ENCODE measurements at regions of chr15 and their contacts with region 1.

Region 1: DNA sequence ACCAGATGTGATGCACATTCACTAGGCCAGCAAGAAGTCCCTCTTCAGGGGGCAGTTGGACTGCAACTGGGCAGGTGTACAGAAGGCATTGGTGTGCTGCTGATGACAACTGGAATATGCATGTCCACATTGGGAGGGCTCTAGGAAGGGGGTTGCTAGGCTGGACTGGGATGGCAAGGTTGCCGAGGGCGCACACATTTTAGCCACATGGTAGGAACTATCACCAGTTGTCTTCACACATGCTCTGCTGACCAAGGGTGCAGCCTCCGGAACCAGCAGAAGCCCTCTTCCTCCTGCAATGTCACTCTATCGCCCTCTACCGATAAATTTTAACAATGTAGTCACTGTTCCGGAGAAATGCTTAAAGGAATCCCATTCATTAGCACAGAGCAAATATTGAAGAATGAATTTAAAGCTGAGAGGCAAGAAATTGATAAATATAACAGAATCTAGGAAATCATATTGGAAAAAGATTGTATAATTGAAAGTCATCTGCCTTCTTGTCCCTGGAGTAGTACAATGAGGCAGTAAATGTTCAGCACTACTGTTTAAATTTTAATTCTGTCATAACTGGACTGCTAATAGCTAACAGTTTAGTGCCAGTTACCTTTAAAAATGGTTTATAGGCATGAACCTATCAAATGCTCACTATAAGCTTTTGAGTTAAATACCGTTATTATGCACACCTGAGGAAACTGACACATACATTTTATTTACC is 22.6 kb upstream of the LYSMD4 start:
- DNase-seq: peak; percentile 37
- H3K4me3 Mint-ChIP-seq: no peak overlapping the region
- H3K27ac Mint-ChIP-seq: no peak overlapping the region
- H3K4me1 Mint-ChIP-seq: no peaks in the 10 kb centered on the region
- H3K27me3 Mint-ChIP-seq: peaks cover 3% of the 10 kb centered on the region

Region 2: DNA sequence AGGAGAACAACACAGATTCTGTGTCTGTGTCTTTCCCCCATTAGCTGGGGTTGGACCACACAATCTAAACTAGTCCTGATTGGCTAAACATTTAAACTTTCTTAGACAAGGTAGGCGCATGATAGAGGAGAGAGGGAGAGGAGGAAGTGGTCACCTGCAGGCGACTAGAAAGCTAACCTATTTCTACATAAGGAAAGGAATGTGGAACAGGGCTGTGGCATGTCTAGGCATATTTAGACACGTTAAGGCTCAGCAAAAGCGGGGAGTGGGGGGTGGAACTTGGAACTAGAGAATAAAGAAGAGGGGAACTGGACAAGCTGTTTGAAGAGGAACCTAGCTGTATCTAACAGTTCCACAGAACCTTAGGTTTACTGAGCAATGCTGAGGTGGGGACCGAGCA is 491.7 kb before region 1 on chr15:
- CTCF ChIA-PET with region 1: interaction called, 84 read pairs
- POLR2A ChIA-PET with region 1: no interaction called
- DNase-seq: no peak
- H3K4me3 Mint-ChIP-seq: no peak overlapping the region
- H3K27ac Mint-ChIP-seq: no peak overlapping the region
- H3K4me1 Mint-ChIP-seq: peaks cover 9% of the 10 kb centered on the region
- H3K27me3 Mint-ChIP-seq: no peaks in the 10 kb centered on the region

Region 3: DNA sequence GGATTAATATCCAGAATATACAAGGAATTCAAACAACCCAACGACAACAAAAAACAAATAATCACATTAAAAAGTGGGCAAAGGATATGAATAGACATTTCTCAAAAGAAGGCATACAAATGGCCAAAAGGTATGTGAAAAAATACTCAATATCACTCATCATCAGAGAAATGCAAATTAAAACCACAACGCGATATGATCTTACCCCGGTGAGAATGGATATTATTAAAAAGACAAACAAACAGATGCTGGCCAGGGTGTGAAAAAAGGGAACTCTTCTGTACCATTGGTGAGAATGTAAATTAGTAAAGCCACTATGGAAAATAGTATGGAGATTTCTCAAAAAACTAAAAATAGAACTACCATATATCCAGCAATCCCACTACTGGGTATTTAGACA is 233.6 kb before region 1 on chr15:
- CTCF ChIA-PET with region 1: no interaction called
- POLR2A ChIA-PET with region 1: no interaction called
- DNase-seq: no peak
- H3K4me3 Mint-ChIP-seq: no peak overlapping the region
- H3K27ac Mint-ChIP-seq: no peak overlapping the region
- H3K4me1 Mint-ChIP-seq: no peaks in the 10 kb centered on the region
- H3K27me3 Mint-ChIP-seq: peaks cover 16% of the 10 kb centered on the region

Region 4: DNA sequence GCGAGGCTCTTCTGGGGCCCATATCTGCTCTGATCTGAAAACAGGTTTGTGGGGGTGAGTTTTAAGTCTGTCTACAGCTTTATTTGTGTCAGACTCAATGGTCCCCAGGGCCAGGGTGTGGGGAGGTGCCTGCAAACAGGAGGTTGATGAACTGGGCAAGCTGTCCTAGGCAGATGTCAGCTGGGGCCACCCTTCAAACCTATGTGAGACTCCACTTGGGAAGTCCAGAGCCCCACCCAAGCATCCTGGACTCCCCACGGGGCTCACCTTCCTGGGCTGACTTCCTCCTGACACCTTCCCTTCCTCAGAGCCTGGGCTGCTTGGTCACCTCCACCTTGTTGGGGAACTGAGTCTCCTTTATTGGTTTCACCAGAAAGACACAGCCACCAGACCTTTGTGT is 14.0 kb before region 1 on chr15:
- CTCF ChIA-PET with region 1: interaction called, 11 read pairs
- POLR2A ChIA-PET with region 1: no interaction called
- DNase-seq: no peak
- H3K4me3 Mint-ChIP-seq: no peak overlapping the region
- H3K27ac Mint-ChIP-seq: no peak overlapping the region
- H3K4me1 Mint-ChIP-seq: peaks cover 2% of the 10 kb centered on the region
- H3K27me3 Mint-ChIP-seq: peaks cover 2% of the 10 kb centered on the region